ENCODE measurements at regions of chr12 and their contacts with region 1.

Region 1: DNA sequence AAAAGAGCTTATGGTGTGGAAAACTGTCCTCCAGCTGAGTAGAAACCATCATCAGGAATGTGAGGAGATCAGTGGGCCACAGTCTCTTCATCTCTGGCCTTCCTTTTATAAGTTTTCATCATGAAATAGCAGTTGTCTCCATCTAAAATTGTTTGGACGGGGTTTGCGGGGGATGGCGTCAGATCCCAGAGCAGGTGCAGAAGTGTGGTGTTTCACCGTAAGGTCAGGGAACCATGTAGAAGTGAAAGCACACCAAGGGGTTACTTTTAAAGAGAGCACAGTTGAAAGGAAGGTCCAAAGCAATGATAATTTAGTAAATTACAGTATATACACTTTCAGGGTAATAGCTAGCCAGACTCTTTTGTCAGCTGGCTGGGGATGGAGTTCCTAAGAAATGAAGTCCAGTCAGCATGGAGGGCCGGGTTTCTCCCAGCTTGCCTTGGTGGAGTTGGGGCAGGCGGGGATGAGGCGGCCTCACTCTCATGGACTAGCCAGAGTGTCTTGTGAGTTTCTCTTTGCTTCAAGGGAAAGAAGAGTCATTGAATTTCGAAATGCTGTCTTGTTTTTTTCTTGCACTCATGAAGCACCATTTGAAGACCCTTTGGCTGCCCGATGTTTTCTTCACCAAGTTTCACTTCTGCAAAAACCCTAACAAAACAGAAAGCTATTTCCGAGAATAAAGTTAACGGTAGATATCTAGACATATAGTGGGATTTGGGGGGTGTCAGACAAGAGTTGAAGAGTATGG is 100.6 kb downstream of the ETV6 start:
- DNase-seq: no peak
- H3K4me3 ChIP-seq: no peak overlapping the region
- H3K27ac ChIP-seq: peak overlapping the region in 1 of 2 donors; percentile 13
- H3K4me1 ChIP-seq: peaks cover 12 to 41% of the 10 kb centered on the region in 2 donors
- H3K27me3 ChIP-seq: no peaks in the 10 kb centered on the region
- CTCF ChIP-seq: no peak

Region 2: GRCh38 chr12:11705010-11705409 is 45.1 kb before region 1 on chr12:
- intact Hi-C with region 1: loop called (anchors 5 kb)
- DNase-seq: peak in 1 of 2 donors; percentile 83
- H3K4me3 ChIP-seq: no peak overlapping the region
- H3K27ac ChIP-seq: peak overlapping the region; percentile 71 to 78
- H3K4me1 ChIP-seq: peaks cover 8 to 51% of the 10 kb centered on the region in 2 donors
- H3K27me3 ChIP-seq: no peaks in the 10 kb centered on the region
- CTCF ChIP-seq: no peak